Naive thymus-derived CD8-positive, alpha-beta T cell (primary cell): ENCODE measurements at regions of chr5 and their contacts with region 1.

Region 1: GRCh38 chr5:177454397-177455035 is 7.9 kb downstream of the PRR7 start:
- DNase-seq: peak; percentile 84 to 98 (median 94)
- ATAC-seq: peak; percentile 46 to 56
- H3K4me3 Mint-ChIP-seq: peak overlapping the region; percentile 33 to 93 (median 84)
- H3K27ac Mint-ChIP-seq: peak overlapping the region in 8 of 10 donors; percentile 67 to 98 (median 90)
- H3K4me1 Mint-ChIP-seq: peaks cover 14 to 41% (median 28%) of the 10 kb centered on the region in 4 donors
- H3K27me3 Mint-ChIP-seq: no peaks in the 10 kb centered on the region

Region 2: GRCh38 chr5:177484902-177485549 is 30.5 kb after region 1 on chr5:
- POLR2A ChIA-PET with region 1: no interaction called
- DNase-seq: no peak
- ATAC-seq: no peak
- H3K4me3 Mint-ChIP-seq: no peak overlapping the region
- H3K27ac Mint-ChIP-seq: peak overlapping the region in 3 of 10 donors; percentile 22 to 79 (median 73)
- H3K4me1 Mint-ChIP-seq: peaks cover 2 to 8% (median 2%) of the 10 kb centered on the region in 4 donors
- H3K27me3 Mint-ChIP-seq: no peaks in the 10 kb centered on the region

Region 3: GRCh38 chr5:177497292-177498033 is 42.9 kb after region 1 on chr5 and contains the start of gene PDLIM7:
- POLR2A ChIA-PET with region 1: interaction called, 43 read pairs
- DNase-seq: peak; percentile 84 to 94 (median 92)
- ATAC-seq: peak; percentile 86 to 89
- H3K4me3 Mint-ChIP-seq: peak within 1 kb of the TSS; percentile 70 to 90 (median 84)
- H3K27ac Mint-ChIP-seq: peak within 1 kb of the TSS in 9 of 10 donors; percentile 20 to 90 (median 69)
- H3K4me1 Mint-ChIP-seq: peaks cover 18 to 55% (median 41%) of the 10 kb centered on the region in 4 donors
- H3K27me3 Mint-ChIP-seq: peaks cover 0 to 2% (median 0%) of the 10 kb centered on the region in 5 donors
- polyA plus RNA-seq, gene PDLIM7: 4.3 to 5.8 (median 5.3) TPM

Region 4: GRCh38 chr5:178388386-178389025 is 934.0 kb after region 1 on chr5:
- POLR2A ChIA-PET with region 1: no interaction called
- DNase-seq: peak in 2 of 10 donors; percentile 13 to 41
- ATAC-seq: no peak
- H3K4me3 Mint-ChIP-seq: no peak overlapping the region
- H3K27ac Mint-ChIP-seq: no peak overlapping the region
- H3K4me1 Mint-ChIP-seq: peaks cover 0 to 2% (median 0%) of the 10 kb centered on the region in 4 donors
- H3K27me3 Mint-ChIP-seq: peaks cover 4 to 12% (median 5%) of the 10 kb centered on the region in 5 donors